GM18951 (cell line): ENCODE measurements at regions of chr17 and their contacts with region 1.

Region 1: DNA sequence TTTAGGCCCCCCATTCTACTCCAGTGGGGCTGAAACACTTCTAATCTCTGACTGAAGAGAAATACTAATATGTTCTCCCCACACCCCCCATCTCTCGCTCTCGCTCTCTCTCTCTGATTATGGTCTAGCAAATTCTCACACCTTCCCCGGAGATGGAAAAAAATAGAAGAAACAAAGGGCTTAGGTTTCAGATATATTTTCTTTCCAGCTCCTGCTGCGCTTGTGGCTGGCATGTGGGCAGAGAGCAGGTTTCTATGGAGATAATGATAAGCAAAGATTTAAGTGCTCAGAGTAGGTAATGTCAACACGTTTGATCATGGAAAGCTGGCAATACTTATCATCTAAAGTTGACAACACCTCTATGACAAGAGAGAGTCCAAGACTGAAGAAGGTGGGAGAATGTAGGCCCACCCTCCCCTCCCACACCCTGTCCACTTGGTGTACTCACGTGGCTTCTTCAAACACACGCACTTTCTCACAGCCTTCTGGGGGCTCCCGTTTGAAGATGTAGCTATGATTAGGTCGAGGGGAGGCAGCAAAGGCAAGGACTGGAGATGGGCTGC is 8.0 kb upstream of the SLC35B1 start:
- POLR2A ChIP-seq: no peak

Region 2: DNA sequence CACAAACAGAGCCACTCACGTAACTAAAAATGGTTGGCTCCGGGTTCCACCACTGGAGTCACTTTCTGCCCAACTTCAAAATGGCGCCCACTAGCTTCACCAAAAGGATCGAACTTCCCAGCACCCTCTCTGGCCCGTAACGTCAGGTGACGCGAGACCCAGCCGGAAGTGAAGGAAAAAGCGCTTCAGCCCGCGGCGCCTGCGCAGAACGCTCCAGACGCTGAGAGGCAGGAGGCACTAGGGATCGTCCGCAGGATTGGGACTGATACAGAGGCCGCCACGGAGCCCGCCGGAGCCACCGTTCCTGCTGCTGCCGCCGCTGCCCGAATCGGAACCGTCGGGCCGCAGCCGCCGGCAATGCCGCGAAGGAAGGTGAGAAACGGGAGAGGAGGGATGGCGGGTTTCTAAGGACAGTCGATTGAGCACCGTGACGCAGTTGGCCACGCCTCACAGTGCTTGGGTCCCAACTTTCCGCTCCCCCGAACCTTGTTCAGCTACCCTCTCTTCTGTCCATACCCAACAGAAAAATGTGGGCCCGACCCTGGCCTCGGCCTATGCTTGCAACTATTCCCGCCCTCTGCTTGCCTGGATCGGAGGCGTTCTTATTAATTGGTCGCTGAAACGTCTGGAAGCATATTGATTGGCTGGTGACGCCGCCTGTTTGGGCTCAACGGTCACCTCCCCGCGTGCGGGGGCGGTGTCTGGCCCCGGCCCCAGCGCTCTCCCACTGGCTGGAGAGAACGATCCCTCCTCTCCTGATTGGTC is 72.9 kb after region 1 on chr17 and contains the start of gene KAT7:
- in situ Hi-C with region 1: loop called (anchors 10 kb)
- POLR2A ChIP-seq: peak; percentile 80